Astrocyte of the cerebellum (primary cell): ENCODE measurements at regions of chr9 and their contacts with region 1.

Region 1: DNA sequence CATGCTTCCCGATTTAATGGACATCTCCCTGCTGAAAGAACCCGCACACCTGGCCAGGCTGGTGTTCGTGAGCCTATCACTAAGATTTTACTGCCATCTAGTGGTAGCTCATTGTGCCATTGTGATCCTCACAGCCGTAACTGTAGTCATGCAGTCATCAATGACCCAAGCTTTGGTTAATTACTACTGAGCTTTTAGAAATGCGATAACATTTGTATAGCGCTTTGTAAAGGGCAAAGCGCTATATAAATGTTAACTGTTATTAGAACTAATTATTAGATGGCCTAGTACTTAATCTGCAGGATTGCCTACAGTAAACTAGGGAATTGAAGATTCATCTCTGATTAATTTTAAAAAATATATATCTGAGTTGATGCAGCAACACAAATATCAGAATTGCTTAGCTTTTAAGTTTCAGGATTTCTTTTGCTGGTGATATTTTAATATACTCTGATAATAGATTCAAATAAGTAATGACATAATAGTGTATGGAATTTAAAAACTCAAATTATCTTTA is 90.2 kb downstream of the HACD4 start:
- DNase-seq: peak; percentile 63
- H3K4me3 ChIP-seq: no peak overlapping the region
- CTCF ChIP-seq: peak; percentile 81

Region 2: DNA sequence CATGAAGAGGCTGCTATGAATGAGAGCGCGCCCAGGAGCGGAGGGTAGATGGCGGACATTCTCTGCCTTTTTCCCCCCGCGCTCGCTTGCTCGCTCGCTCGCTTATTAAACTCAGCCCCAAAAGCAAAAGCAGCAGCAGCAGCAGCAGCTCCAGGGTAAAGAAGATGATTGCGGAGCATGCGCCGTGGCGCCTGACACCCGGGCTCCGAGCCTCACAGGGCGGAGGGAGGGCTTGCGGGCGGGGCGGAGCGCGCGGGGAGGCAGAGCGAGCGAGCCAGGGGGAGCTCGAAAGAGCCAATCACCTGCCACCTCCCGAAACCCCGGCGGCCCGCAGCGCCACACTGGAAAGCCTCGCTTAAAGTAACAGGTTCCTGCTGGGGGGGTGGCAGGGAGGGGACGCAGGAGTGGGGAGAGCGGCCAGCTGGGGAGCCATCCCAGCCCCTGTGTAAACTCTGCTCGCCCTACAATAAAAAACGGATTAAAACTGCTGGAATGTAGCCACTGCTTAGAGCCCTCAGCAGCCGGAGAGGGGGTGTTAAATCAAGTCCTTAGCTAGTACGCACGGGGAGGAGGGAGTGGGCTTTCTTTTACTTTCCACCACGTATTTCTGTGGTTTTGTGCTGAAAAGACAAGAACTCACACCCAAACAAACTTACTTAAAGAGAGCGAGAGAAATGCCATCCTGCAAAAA is 318.8 kb before region 1 on chr9 and contains the start of gene MLLT3:
- in situ Hi-C with region 1: loop called (anchors 5 kb)
- DNase-seq: peak; percentile 87
- H3K4me3 ChIP-seq: peak within 1 kb of the TSS; percentile 76
- CTCF ChIP-seq: peak; percentile 4